Activated CD4-positive, alpha-beta T cell treated with anti-CD3 and anti-CD28 coated beads for 36 hours (primary cell): ENCODE measurements at regions of chr3 and their contacts with region 1.

Region 1: DNA sequence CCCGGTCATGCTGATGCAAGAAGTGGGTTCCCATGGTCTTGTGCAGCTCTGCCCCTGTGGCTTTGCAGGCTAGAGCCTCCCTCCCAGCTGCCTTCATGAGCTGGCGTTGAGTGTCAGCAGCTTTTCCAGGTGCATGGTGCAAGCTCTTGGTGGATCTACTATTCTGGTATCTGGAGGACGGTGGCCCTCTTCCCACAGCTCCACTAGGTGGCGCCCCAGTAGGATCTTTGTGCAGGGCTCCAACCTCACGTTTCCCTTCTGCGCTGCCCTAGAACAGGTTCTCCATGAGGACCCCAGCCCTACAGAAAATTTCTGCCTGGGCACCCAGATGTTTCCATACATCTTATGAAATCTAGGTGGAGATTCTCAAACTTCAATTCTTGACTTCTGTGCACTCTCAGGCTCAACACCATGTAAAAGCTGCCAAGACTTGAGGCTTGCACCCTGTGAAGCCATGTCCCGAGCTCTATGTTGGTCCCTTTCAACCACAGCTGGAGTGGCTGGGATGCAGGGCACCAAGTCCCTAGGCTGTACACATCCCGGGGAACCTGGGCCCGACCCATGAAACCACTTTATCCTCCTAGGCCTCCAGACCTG is 238.4 kb upstream of the MDFIC2 start:
- DNase-seq: peak; percentile 88
- ATAC-seq: peak; percentile 91
- H3K4me3 Mint-ChIP-seq: no peak overlapping the region
- H3K27ac Mint-ChIP-seq: no peak overlapping the region
- H3K4me1 Mint-ChIP-seq: peaks cover 4% of the 10 kb centered on the region
- H3K27me3 Mint-ChIP-seq: peaks cover 2% of the 10 kb centered on the region

Region 2: GRCh38 chr3:70096376-70097066 is 454.3 kb before region 1 on chr3:
- CTCF ChIA-PET with region 1: no interaction called
- POLR2A ChIA-PET with region 1: no interaction called
- intact Hi-C with region 1: no loop called
- DNase-seq: peak; percentile 33
- ATAC-seq: peak; percentile 83
- H3K4me3 Mint-ChIP-seq: no peak overlapping the region
- H3K27ac Mint-ChIP-seq: no peak overlapping the region
- H3K4me1 Mint-ChIP-seq: peaks cover 3% of the 10 kb centered on the region
- H3K27me3 Mint-ChIP-seq: peaks cover 6% of the 10 kb centered on the region

Region 3: DNA sequence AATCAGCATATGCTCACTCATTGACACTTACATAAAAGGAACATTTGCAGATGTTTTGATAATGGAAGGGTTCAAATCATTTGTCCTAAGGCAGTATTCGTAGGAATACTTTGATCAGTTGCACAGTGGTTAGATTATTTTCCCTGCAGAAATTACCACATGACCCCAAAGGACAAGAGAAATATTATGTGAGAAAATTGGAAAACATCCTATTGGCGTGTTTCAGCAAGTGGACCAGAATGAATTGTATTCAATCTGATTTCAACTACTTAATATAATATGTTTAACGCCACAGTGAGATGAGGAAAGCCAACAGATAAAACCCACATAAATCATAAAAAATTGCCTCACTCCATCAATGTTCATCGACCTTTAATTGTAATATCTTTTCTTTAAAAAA is 43.3 kb before region 1 on chr3:
- CTCF ChIA-PET with region 1: no interaction called
- POLR2A ChIA-PET with region 1: no interaction called
- intact Hi-C with region 1: no loop called
- DNase-seq: no peak
- ATAC-seq: no peak
- H3K4me3 Mint-ChIP-seq: no peak overlapping the region
- H3K27ac Mint-ChIP-seq: no peak overlapping the region
- H3K4me1 Mint-ChIP-seq: no peaks in the 10 kb centered on the region
- H3K27me3 Mint-ChIP-seq: peaks cover 4% of the 10 kb centered on the region

Region 4: GRCh38 chr3:71050538-71051258 is 499.9 kb after region 1 on chr3:
- CTCF ChIA-PET with region 1: no interaction called
- POLR2A ChIA-PET with region 1: interaction called, 10 read pairs
- intact Hi-C with region 1: no loop called
- DNase-seq: peak; percentile 65
- ATAC-seq: peak; percentile 87
- H3K4me3 Mint-ChIP-seq: peak overlapping the region; percentile 36
- H3K27ac Mint-ChIP-seq: peak overlapping the region; percentile 92
- H3K4me1 Mint-ChIP-seq: peaks cover 100% of the 10 kb centered on the region
- H3K27me3 Mint-ChIP-seq: no peaks in the 10 kb centered on the region